ENCODE measurements at regions of chr15 and their contacts with region 1.

Region 1: GRCh38 chr15:40684381-40684780 is 10.6 kb upstream of the RAD51 start:
- DNase-seq: no peak
- ATAC-seq: no peak
- H3K4me3 Mint-ChIP-seq: no peak overlapping the region
- H3K27ac Mint-ChIP-seq: no peak overlapping the region
- H3K4me1 Mint-ChIP-seq: no peaks in the 10 kb centered on the region
- H3K27me3 Mint-ChIP-seq: no peaks in the 10 kb centered on the region
- CTCF ChIP-seq: no peak

Region 2: DNA sequence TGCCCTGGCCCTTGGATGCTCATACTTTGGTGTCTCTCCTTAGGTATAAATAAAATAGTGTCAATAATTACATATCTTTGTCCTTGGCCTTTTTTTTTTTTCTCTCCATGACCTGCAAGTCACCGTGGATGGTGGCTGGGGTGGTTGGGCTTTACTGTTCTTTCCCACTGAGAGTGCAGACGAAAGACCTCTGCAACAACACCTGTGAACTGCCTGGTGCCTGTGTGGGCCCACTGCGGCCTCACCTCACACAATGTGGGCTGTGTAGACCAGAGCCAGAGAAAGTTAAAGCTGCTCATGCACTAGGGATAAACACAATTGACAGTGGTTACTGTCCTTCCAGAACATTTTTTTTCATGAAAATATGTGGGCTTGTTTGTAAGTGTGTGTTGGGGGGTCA is 158.5 kb before region 1 on chr15:
- CTCF ChIA-PET with region 1: no interaction called
- POLR2A ChIA-PET with region 1: no interaction called
- intact Hi-C with region 1: no loop called
- DNase-seq: no peak
- ATAC-seq: no peak
- H3K4me3 Mint-ChIP-seq: no peak overlapping the region
- H3K27ac Mint-ChIP-seq: no peak overlapping the region
- H3K4me1 Mint-ChIP-seq: no peaks in the 10 kb centered on the region
- H3K27me3 Mint-ChIP-seq: no peaks in the 10 kb centered on the region
- CTCF ChIP-seq: no peak

Region 3: DNA sequence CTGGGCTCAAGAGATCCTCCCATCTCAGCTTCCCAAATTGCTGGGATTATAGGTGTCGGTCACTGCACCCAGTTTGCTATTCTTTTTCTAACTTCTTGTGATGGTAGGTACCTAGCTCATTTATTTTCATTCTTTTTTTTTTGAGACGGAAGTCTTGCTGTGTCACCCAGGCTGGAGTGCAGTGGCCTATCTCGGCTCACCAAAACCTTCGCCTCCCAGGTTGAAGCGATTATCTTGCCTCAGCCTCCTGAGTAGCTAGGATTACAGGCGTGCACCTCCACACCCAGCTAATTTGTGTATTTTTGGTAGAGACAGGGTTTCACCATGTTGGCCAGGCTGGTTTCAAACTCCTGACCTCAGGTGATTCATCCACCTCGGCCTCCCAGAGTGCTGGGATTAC is 19.5 kb before region 1 on chr15:
- CTCF ChIA-PET with region 1: interaction called, 17 read pairs
- POLR2A ChIA-PET with region 1: no interaction called
- intact Hi-C with region 1: no loop called
- DNase-seq: no peak
- ATAC-seq: no peak
- H3K4me3 Mint-ChIP-seq: no peak overlapping the region
- H3K27ac Mint-ChIP-seq: no peak overlapping the region
- H3K4me1 Mint-ChIP-seq: no peaks in the 10 kb centered on the region
- H3K27me3 Mint-ChIP-seq: no peaks in the 10 kb centered on the region
- CTCF ChIP-seq: no peak